ENCODE measurements at regions of chr2 and their contacts with region 1.

Region 1: GRCh38 chr2:241443486-241444223 is 64.7 kb downstream of the STK25 start:
- DNase-seq: no peak

Region 2: GRCh38 chr2:240604939-240605716 is 838.5 kb before region 1 on chr2:
- intact Hi-C with region 1: loop called in 1 of 2 experiments (anchors 5 kb)
- DNase-seq: peak; percentile 79

Region 3: GRCh38 chr2:241421330-241421729 is 22.3 kb before region 1 on chr2:
- intact Hi-C with region 1: loop called in 1 of 2 experiments (anchors 1 kb)
- DNase-seq: no peak

Measured in posterior vena cava (tissue), 2 donors.